A673 (cell line): ENCODE measurements at regions of chr15 and their contacts with region 1.

Region 1: DNA sequence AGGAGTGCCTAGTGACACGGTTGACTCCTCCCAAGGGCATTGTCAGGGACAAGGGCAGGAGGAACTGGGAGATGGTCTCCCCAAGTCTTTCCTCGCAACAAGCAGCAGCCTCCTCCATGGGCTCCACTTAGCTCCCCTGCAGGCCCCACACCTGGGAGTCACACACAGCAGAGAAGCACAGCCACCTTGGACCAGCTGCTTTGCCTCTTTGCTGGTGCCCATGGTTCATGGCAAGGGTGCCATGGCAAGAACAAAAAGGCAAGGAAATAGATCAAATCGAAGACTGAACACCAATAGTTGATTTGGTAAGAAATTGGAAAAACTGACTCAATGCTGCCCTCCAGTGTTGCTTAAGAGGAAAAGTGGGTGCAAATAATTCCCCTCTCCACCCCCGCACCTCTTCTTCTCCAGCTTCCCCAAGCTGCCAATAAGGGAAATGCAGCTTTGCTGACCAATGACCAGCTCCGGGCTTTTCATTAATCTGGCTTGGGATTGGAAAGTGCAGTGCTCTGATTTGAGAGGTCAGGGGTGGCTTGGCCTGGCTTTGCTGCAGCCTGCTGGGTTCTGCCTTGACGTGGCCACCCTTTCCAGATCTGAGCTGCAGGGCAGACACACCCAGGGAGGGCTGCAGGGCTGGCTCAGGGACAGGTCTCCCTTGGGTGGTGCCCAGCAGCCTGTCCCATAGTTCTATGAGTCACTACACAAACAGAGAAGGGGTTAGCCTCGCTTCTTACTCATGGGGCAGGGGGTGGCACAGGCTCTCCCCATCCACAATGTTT is 162.0 kb downstream of the KLF13 start:
- DNase-seq: peak; percentile 74
- H3K4me3 ChIP-seq: no peak overlapping the region
- H3K27ac ChIP-seq: no peak overlapping the region
- H3K4me1 ChIP-seq: no peaks in the 10 kb centered on the region
- H3K27me3 ChIP-seq: no peaks in the 10 kb centered on the region
- CTCF ChIP-seq: peak; percentile 81

Region 2: DNA sequence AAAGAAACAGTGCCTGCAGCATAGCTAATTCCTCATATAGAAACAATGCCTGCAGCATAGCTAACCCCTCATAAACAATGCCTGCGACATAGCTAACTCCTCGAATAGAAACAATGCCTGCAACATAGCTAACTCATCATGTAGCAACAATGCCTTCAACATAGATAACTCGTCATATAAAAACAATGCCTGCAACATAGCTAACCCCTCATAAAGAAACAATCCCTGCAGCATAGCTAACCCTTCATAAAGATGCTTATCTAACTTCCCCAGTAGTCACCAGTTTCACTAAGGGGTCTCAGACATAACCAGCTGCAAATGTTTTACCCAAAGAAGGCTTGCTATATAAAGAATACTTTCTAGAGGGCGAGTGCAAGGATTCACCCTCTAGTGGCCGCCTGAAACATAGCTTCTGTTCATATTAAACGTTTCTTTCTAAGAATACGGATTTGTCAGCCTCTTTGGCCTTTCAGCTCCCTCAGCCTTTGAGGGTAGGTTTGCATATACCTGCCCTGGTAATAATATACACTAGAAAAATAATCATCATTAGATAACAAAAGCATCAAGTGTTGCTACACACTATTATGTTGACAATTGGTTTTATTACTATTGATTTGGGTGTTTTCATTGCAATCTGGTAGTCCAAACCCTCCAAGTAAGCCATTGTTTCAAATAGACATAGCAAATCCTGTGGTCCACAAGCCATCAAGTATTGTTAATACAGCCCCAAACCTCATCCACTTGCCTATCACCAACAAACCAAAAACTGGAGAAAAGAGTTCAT is 629.3 kb before region 1 on chr15:
- CTCF ChIA-PET with region 1: no interaction called
- POLR2A ChIA-PET with region 1: no interaction called
- intact Hi-C with region 1: loop called (anchors 5 kb)
- DNase-seq: peak; percentile 46
- H3K4me3 ChIP-seq: no peak overlapping the region
- H3K27ac ChIP-seq: no peak overlapping the region
- H3K4me1 ChIP-seq: no peaks in the 10 kb centered on the region
- H3K27me3 ChIP-seq: no peaks in the 10 kb centered on the region
- CTCF ChIP-seq: peak; percentile 74

Region 3: DNA sequence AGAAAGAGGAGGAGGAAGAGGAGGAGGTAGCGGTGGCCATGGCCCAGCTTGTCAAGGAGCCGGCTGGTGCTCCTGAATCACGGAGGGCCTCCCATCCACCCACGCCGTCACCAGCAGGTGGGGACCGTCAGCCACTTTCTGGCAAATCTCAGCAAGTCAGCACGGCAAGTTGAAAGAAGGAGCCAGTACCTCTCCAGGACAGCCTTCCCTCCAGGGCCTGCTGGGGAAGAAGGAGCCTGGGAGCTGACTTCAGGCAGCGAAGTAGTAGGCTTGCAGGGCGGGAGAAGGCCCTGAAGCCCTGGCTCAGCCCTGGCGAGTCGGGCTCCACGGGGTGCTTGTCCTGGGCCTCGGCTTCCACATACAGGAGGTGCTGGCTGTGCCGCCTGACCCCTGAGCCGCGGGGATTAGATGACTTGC is 287.9 kb before region 1 on chr15:
- CTCF ChIA-PET with region 1: interaction called, 7 read pairs
- POLR2A ChIA-PET with region 1: no interaction called
- intact Hi-C with region 1: loop called (anchors 5 kb)
- DNase-seq: peak; percentile 52
- H3K4me3 ChIP-seq: no peak overlapping the region
- H3K27ac ChIP-seq: no peak overlapping the region
- H3K4me1 ChIP-seq: no peaks in the 10 kb centered on the region
- H3K27me3 ChIP-seq: no peaks in the 10 kb centered on the region
- CTCF ChIP-seq: peak; percentile 56; the same call in 1 of the 2 replicates

Region 4: GRCh38 chr15:31241888-31242522 is 246.6 kb before region 1 on chr15:
- CTCF ChIA-PET with region 1: no interaction called
- POLR2A ChIA-PET with region 1: no interaction called
- intact Hi-C with region 1: no loop called
- DNase-seq: no peak
- H3K4me3 ChIP-seq: no peak overlapping the region
- H3K27ac ChIP-seq: no peak overlapping the region
- H3K4me1 ChIP-seq: peaks cover 4% of the 10 kb centered on the region
- H3K27me3 ChIP-seq: no peaks in the 10 kb centered on the region
- CTCF ChIP-seq: no peak

Region 5: DNA sequence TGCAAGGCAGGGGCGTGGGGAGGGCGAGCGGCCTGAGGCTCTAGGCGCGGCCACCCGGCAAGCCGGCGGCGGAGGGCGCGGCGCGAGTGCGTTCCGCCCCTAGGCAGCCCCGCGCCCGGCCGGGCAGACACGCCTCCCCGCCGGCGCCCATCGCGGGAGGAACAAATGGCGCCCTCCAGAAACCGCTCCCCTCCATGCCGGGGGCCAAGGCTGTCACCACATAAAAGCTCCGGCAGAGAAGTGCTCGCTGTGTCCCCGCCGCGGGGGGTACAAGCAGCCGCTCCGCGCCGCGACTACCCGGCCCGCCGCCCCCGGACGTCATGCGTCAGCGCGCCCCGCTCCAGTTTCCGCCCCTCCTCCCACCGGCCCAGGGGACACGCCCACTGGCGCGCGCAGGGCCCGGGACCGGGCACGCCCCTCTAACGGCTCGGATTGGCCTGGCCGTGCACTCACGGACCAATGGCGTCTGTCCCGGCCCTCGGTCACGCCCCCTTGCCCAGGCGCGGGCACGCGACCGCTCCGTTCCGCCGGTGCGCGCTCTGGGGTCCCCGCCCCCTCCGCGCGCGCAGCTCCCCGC is 162.4 kb before region 1 on chr15:
- CTCF ChIA-PET with region 1: no interaction called
- POLR2A ChIA-PET with region 1: no interaction called
- intact Hi-C with region 1: loop called (anchors 10 kb)
- DNase-seq: peak; percentile 97
- H3K4me3 ChIP-seq: peak overlapping the region; percentile 93
- H3K27ac ChIP-seq: peak overlapping the region; percentile 95
- H3K4me1 ChIP-seq: peaks cover 4% of the 10 kb centered on the region
- H3K27me3 ChIP-seq: no peaks in the 10 kb centered on the region
- CTCF ChIP-seq: no peak

Region 6: GRCh38 chr15:31365655-31366127 is 122.9 kb before region 1 on chr15:
- CTCF ChIA-PET with region 1: interaction called, 3 read pairs
- POLR2A ChIA-PET with region 1: no interaction called
- intact Hi-C with region 1: loop called (anchors 5 kb)
- DNase-seq: peak; percentile 89
- H3K4me3 ChIP-seq: peak overlapping the region; percentile 26
- H3K27ac ChIP-seq: peak overlapping the region; percentile 64
- H3K4me1 ChIP-seq: peaks cover 36% of the 10 kb centered on the region
- H3K27me3 ChIP-seq: no peaks in the 10 kb centered on the region
- CTCF ChIP-seq: peak; percentile 54

Region 7: GRCh38 chr15:31435261-31435911 is 53.2 kb before region 1 on chr15:
- CTCF ChIA-PET with region 1: interaction called, 4 read pairs
- POLR2A ChIA-PET with region 1: no interaction called
- intact Hi-C with region 1: loop called (anchors 10 kb)
- DNase-seq: no peak
- H3K4me3 ChIP-seq: no peak overlapping the region
- H3K27ac ChIP-seq: no peak overlapping the region
- H3K4me1 ChIP-seq: no peaks in the 10 kb centered on the region
- H3K27me3 ChIP-seq: no peaks in the 10 kb centered on the region
- CTCF ChIP-seq: peak; percentile 35; the same call in 1 of the 2 replicates

Region 8: GRCh38 chr15:31660816-31661215 is 172.2 kb after region 1 on chr15:
- CTCF ChIA-PET with region 1: no interaction called
- POLR2A ChIA-PET with region 1: no interaction called
- intact Hi-C with region 1: no loop called
- DNase-seq: no peak
- H3K4me3 ChIP-seq: no peak overlapping the region
- H3K27ac ChIP-seq: no peak overlapping the region
- H3K4me1 ChIP-seq: no peaks in the 10 kb centered on the region
- H3K27me3 ChIP-seq: no peaks in the 10 kb centered on the region
- CTCF ChIP-seq: no peak